ENCODE measurements at regions of chr2 and their contacts with region 1.

Region 1: GRCh38 chr2:205555566-205556230 is 126.6 kb upstream of the NRP2 start:
- DNase-seq: no peak
- H3K4me3 ChIP-seq: no peak overlapping the region
- H3K4me3 Mint-ChIP-seq: no peak overlapping the region
- H3K27ac Mint-ChIP-seq: no peak overlapping the region
- H3K4me1 ChIP-seq: no peaks in the 10 kb centered on the region
- H3K4me1 Mint-ChIP-seq: no peaks in the 10 kb centered on the region
- H3K27me3 ChIP-seq: no peaks in the 10 kb centered on the region
- H3K27me3 Mint-ChIP-seq: no peaks in the 10 kb centered on the region
- CTCF ChIP-seq: no peak

Region 2: GRCh38 chr2:205496772-205497171 is 58.9 kb before region 1 on chr2:
- CTCF ChIA-PET with region 1: no interaction called
- POLR2A ChIA-PET with region 1: no interaction called
- intact Hi-C with region 1: loop called (anchors 2 kb)
- DNase-seq: no peak
- H3K4me3 ChIP-seq: no peak overlapping the region
- H3K4me3 Mint-ChIP-seq: no peak overlapping the region
- H3K27ac Mint-ChIP-seq: no peak overlapping the region
- H3K4me1 ChIP-seq: peaks cover 27% of the 10 kb centered on the region
- H3K4me1 Mint-ChIP-seq: peaks cover 35% of the 10 kb centered on the region
- H3K27me3 ChIP-seq: no peaks in the 10 kb centered on the region
- H3K27me3 Mint-ChIP-seq: no peaks in the 10 kb centered on the region
- CTCF ChIP-seq: no peak